Right ventricle myocardium inferior (tissue), 1 donor: ENCODE measurements at regions of chrX and their contacts with region 1.

Region 1: DNA sequence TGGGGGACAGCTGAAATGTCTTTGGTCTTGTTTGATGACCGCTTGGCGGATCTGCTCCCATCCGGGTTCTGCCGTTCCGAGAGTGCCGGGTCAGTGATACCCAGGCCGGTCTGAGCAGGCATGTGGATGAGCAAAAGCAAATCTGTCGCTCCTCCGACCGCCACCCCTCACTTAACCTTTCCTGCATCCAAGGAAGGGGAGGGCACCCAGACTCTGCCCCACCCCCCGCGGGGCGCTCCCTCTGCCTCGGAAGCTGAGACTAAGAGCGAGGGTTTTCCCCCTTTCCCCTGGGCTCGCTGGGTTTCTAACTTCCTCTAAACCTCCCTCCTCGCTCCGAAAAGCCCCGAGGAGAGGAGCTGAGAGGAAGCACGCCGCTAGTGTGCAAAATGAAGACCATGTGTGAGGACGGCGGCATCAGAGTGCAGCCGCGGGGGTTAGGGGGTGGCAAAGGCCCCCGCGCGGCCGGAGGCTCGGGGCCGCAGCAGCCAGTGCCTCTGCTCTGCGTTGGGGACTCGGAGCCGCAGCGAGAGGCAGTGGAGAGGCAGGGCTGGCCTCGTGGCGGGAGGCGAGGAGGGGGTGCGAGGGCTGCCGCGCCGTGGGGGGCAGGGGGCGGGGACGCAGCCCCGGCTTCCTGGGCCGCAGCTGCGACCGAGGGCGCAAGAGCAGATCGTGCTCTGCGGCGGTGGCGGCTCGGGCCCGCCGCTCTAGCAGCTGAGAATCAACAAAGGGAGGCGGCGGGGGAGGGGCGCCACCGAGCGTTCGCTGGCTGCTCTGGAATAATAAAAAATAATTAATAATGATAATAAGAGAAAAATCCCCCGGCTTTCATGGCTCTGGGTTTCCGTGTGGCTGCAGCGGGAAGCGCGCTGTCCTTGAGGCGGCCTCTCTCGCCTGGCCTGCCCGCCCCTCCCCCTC is 55.8 kb upstream of the BCOR start:
- DNase-seq: peak; percentile 84
- ATAC-seq: peak; percentile 15

Region 2: GRCh38 chrX:39736216-39737211 is 417.1 kb before region 1 on chrX:
- intact Hi-C with region 1: loop called (anchors 5 kb)
- DNase-seq: peak; percentile 91
- ATAC-seq: peak; percentile 93

Region 3: GRCh38 chrX:40108959-40109287 is 44.7 kb before region 1 on chrX:
- intact Hi-C with region 1: loop called (anchors 2 kb)
- DNase-seq: peak; percentile 87
- ATAC-seq: peak; percentile 82

Region 4: GRCh38 chrX:40175511-40176350 is 22.1 kb after region 1 on chrX:
- intact Hi-C with region 1: loop called (anchors 2 kb)
- DNase-seq: peak; percentile 90
- ATAC-seq: peak; percentile 65